Naive thymus-derived CD4-positive, alpha-beta T cell (primary cell): ENCODE measurements at regions of chr17 and their contacts with region 1.

Region 1: GRCh38 chr17:64306850-64307463 is 43.9 kb upstream of the TEX2 start:
- DNase-seq: peak; percentile 51 to 77 (median 65)
- ATAC-seq: peak; percentile 82
- H3K4me3 ChIP-seq: no peak overlapping the region
- H3K4me3 Mint-ChIP-seq: no peak overlapping the region
- H3K27ac ChIP-seq: no peak overlapping the region
- H3K27ac Mint-ChIP-seq: peak overlapping the region in 2 of 9 donors; percentile 8 to 22
- H3K4me1 ChIP-seq: no peaks in the 10 kb centered on the region
- H3K4me1 Mint-ChIP-seq: peaks cover 0 to 4% (median 0%) of the 10 kb centered on the region in 7 donors
- H3K27me3 ChIP-seq: no peaks in the 10 kb centered on the region
- H3K27me3 Mint-ChIP-seq: peaks cover 0 to 2% (median 0%) of the 10 kb centered on the region in 5 donors

Region 2: GRCh38 chr17:64320613-64321553 is 13.9 kb after region 1 on chr17:
- CTCF ChIA-PET with region 1: interaction called, 6 read pairs
- POLR2A ChIA-PET with region 1: no interaction called
- intact Hi-C with region 1: loop called in 1 of 2 experiments (anchors 2 kb)
- DNase-seq: peak in 8 of 9 donors; percentile 32 to 67 (median 54)
- ATAC-seq: peak; percentile 85
- H3K4me3 ChIP-seq: no peak overlapping the region
- H3K4me3 Mint-ChIP-seq: peak overlapping the region in 6 of 10 donors; percentile 20 to 62 (median 44)
- H3K27ac ChIP-seq: no peak overlapping the region
- H3K27ac Mint-ChIP-seq: peak overlapping the region in 8 of 9 donors; percentile 60 to 95 (median 82)
- H3K4me1 ChIP-seq: peaks cover 0 to 7% of the 10 kb centered on the region in 2 donors
- H3K4me1 Mint-ChIP-seq: peaks cover 2 to 35% (median 22%) of the 10 kb centered on the region in 7 donors
- H3K27me3 ChIP-seq: no peaks in the 10 kb centered on the region
- H3K27me3 Mint-ChIP-seq: peaks cover 0 to 9% (median 0%) of the 10 kb centered on the region in 5 donors

Region 3: DNA sequence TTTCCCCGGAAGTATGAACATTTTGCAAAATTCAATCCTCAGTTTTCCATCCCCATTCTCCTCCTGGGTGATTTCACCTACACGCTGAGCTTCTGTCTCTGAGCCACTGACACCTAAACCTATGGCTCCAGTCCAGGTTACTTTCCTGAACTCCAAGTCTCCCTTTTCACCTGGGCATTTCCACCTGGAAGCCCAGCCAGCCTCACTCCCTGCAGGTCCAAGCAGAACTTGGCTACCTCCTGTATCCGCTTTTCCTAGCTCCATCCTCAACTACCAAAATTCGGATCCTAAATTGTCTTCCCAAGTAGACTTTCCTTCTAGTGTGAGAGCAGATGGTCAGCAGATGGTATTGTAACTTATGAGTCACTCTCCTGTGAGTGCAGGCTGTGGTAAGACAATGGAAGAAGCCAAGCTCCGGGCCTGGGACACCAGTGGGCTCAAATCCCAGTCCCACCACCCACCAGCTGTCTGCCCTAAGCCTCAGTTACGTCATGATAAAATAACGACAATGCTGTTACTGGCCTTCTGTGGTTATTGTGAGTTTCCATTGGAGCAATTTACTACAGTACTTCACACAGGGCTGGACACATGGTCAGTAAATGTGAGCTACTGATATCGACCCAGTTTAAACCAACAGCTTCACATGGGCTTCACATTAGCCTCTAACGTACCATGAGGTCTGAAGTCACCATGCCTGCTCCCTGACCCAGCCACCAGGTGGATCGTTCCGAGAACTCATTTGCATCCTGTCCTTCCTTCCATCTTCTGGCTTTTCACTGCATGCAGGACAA is 50.4 kb after region 1 on chr17:
- CTCF ChIA-PET with region 1: interaction called, 3 read pairs
- POLR2A ChIA-PET with region 1: no interaction called
- intact Hi-C with region 1: loop called in 1 of 2 experiments (anchors 2 kb)
- DNase-seq: no peak
- ATAC-seq: no peak
- H3K4me3 ChIP-seq: no peak overlapping the region
- H3K4me3 Mint-ChIP-seq: no peak overlapping the region
- H3K27ac ChIP-seq: no peak overlapping the region
- H3K27ac Mint-ChIP-seq: peak overlapping the region in 8 of 9 donors; percentile 38 to 89 (median 58)
- H3K4me1 ChIP-seq: no peaks in the 10 kb centered on the region
- H3K4me1 Mint-ChIP-seq: peaks cover 10 to 32% (median 26%) of the 10 kb centered on the region in 7 donors
- H3K27me3 ChIP-seq: no peaks in the 10 kb centered on the region
- H3K27me3 Mint-ChIP-seq: peaks cover 0 to 2% (median 0%) of the 10 kb centered on the region in 5 donors

Region 4: GRCh38 chr17:64491034-64491859 is 184.3 kb after region 1 on chr17:
- CTCF ChIA-PET with region 1: interaction called, 8 read pairs
- POLR2A ChIA-PET with region 1: no interaction called
- intact Hi-C with region 1: loop called (anchors 5 kb)
- DNase-seq: peak in 7 of 9 donors; percentile 35 to 56 (median 44)
- ATAC-seq: peak; percentile 82
- H3K4me3 ChIP-seq: no peak overlapping the region
- H3K4me3 Mint-ChIP-seq: peak overlapping the region in 1 of 10 donors; percentile 14
- H3K27ac ChIP-seq: no peak overlapping the region
- H3K27ac Mint-ChIP-seq: no peak overlapping the region
- H3K4me1 ChIP-seq: peaks cover 12 to 15% of the 10 kb centered on the region in 2 donors
- H3K4me1 Mint-ChIP-seq: peaks cover 19 to 40% (median 28%) of the 10 kb centered on the region in 7 donors
- H3K27me3 ChIP-seq: no peaks in the 10 kb centered on the region
- H3K27me3 Mint-ChIP-seq: no peaks in the 10 kb centered on the region

Region 5: GRCh38 chr17:64538508-64539130 is 231.7 kb after region 1 on chr17:
- CTCF ChIA-PET with region 1: no interaction called
- POLR2A ChIA-PET with region 1: no interaction called
- intact Hi-C with region 1: no loop called
- DNase-seq: no peak
- ATAC-seq: no peak
- H3K4me3 ChIP-seq: no peak overlapping the region
- H3K4me3 Mint-ChIP-seq: no peak overlapping the region
- H3K27ac ChIP-seq: no peak overlapping the region
- H3K27ac Mint-ChIP-seq: peak overlapping the region in 8 of 9 donors; percentile 5 to 84 (median 44)
- H3K4me1 ChIP-seq: no peaks in the 10 kb centered on the region
- H3K4me1 Mint-ChIP-seq: peaks cover 0 to 8% (median 0%) of the 10 kb centered on the region in 7 donors
- H3K27me3 ChIP-seq: no peaks in the 10 kb centered on the region
- H3K27me3 Mint-ChIP-seq: no peaks in the 10 kb centered on the region

Region 6: DNA sequence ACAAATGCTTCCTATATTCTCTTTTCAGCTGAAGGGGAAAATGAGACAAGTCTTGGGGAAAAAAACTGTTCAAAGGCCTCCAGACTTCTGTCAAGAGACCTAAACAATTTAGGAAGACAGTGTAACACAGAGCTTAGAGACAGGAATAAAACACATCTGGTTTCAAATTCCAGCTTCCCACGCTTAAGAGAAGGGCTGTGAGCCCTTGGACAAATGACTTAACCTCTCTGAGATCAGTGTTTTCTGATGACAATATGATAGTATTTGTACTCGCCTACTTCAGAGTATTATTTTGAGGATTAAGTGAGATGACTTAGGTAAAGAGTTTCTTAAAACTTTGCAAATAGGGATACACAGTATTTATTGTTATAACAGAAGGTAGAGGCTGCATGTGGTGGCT is 325.6 kb after region 1 on chr17:
- CTCF ChIA-PET with region 1: no interaction called
- POLR2A ChIA-PET with region 1: no interaction called
- intact Hi-C with region 1: no loop called
- DNase-seq: no peak
- ATAC-seq: no peak
- H3K4me3 ChIP-seq: no peak overlapping the region
- H3K4me3 Mint-ChIP-seq: no peak overlapping the region
- H3K27ac ChIP-seq: no peak overlapping the region
- H3K27ac Mint-ChIP-seq: peak overlapping the region in 3 of 9 donors; percentile 31 to 56 (median 35)
- H3K4me1 ChIP-seq: peaks cover 4 to 24% of the 10 kb centered on the region in 2 donors
- H3K4me1 Mint-ChIP-seq: peaks cover 46 to 82% (median 75%) of the 10 kb centered on the region in 7 donors
- H3K27me3 ChIP-seq: no peaks in the 10 kb centered on the region
- H3K27me3 Mint-ChIP-seq: no peaks in the 10 kb centered on the region

Region 7: GRCh38 chr17:64653325-64653984 is 346.5 kb after region 1 on chr17:
- CTCF ChIA-PET with region 1: no interaction called
- POLR2A ChIA-PET with region 1: no interaction called
- intact Hi-C with region 1: loop called in 1 of 2 experiments (anchors 1 kb)
- DNase-seq: no peak
- ATAC-seq: no peak
- H3K4me3 ChIP-seq: no peak overlapping the region
- H3K4me3 Mint-ChIP-seq: peak overlapping the region in 1 of 10 donors; percentile 0
- H3K27ac ChIP-seq: no peak overlapping the region
- H3K27ac Mint-ChIP-seq: peak overlapping the region in 4 of 9 donors; percentile 8 to 65 (median 36)
- H3K4me1 ChIP-seq: peaks cover 6 to 8% of the 10 kb centered on the region in 2 donors
- H3K4me1 Mint-ChIP-seq: peaks cover 27 to 73% (median 53%) of the 10 kb centered on the region in 7 donors
- H3K27me3 ChIP-seq: no peaks in the 10 kb centered on the region
- H3K27me3 Mint-ChIP-seq: no peaks in the 10 kb centered on the region